AG04449 (cell line): ENCODE measurements at regions of chr13 and their contacts with region 1.

Region 1: DNA sequence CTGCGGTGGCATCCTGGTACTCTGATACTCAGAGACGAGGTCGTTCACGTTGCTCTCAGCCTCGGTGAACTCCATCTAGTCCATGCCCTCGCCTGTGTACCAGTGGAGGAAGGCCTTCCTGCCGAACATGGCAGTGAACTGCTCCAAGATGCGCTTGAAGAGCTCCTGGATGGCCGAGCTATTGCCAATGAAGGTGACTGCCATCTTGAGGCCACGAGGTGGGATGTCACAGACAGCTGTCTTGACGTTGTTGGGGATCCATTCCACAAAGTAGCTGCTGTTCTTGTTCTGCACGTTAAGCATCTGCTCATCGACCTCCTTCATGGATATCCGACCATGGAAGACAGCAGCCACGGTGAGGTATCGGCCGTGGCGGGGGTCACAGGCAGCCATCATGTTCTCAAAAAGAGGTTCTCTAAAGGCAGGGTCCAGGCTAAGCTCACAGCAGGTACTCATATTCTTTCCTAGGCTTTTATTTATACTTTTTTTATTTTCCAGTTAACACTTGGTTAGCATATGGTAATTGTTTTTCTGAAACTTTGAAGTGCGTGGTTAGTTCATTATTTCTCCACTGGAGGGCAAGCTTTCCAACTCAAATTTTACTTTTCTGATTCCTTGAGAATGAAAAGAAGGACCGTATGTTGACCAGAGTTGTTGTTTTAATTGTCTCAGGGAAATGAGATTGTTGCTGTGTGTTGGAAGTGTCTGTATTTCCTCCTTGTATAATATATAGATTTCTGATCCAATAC is 72.4 kb upstream of the RGCC start:
- DNase-seq: no peak
- H3K4me3 ChIP-seq: no peak overlapping the region
- CTCF ChIP-seq: peak; percentile 21

Region 2: DNA sequence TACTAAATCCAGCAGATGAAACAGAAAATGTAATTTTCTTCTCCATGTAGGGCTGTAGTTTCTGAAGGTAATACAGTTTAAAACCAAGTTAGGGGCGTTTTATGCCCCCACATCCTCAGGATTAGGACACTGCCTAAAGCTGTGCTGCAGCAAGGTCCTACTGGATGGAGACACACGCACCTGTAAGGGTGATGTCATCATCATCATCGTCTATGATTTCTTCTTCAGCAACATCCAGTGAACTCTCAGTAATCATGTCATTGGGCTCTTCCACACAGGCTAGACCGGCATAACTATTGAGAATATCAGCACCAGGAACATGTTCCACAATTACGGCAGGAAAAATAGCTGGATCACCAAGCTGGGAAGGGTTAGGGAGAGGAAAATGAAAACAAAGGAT is 426.3 kb before region 1 on chr13:
- CTCF ChIA-PET with region 1: no interaction called
- POLR2A ChIA-PET with region 1: no interaction called
- DNase-seq: no peak
- H3K4me3 ChIP-seq: no peak overlapping the region
- CTCF ChIP-seq: no peak

Region 3: DNA sequence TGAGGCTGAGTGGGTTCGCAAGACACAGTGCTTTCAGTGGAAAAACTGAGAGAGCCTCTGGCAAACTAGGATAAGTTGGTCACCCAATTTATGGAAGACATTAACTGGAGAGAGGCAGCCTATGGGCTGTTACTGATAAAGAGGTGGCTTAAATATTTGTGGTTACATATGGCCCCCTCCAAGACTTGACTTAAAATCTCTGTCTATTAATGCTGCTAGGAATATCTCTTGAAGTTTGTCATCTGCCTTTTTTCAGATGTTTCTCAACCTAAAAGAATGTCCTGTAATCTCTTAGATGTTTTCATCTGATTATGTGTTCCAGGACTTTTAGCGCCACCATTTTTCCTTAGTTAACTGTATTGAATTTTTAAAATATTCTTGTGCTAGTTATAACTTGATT is 19.3 kb before region 1 on chr13:
- CTCF ChIA-PET with region 1: interaction called, 12 read pairs
- POLR2A ChIA-PET with region 1: no interaction called
- DNase-seq: peak; percentile 21
- H3K4me3 ChIP-seq: no peak overlapping the region
- CTCF ChIP-seq: no peak

Region 4: GRCh38 chr13:41370736-41371135 is 14.2 kb before region 1 on chr13:
- CTCF ChIA-PET with region 1: interaction called, 35 read pairs
- POLR2A ChIA-PET with region 1: interaction called, 3 read pairs
- DNase-seq: no peak
- H3K4me3 ChIP-seq: no peak overlapping the region
- CTCF ChIP-seq: no peak

Region 5: DNA sequence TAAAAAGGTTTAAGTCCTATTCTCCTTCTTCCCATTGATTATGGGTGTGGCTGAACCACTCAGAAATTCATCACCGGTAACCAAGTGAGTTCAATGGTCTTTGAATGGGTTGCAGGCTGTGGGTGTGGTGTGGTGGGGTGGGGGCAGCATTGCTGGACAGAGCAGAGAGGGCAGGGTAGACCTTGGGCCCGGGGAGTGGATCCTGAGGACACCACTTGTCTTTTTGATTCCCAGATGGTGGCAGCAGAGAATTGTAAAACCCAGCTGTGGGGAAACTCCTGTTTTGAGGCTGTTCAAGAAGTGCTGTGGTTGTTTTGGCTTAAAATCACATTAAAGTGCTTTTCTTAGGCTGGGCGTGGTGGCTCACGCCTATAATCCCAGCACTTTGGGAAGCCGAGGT is 26.6 kb after region 1 on chr13:
- CTCF ChIA-PET with region 1: interaction called, 12 read pairs
- POLR2A ChIA-PET with region 1: no interaction called
- DNase-seq: peak; percentile 10
- H3K4me3 ChIP-seq: no peak overlapping the region
- CTCF ChIP-seq: peak; percentile 37